ENCODE measurements at regions of chr7 and their contacts with region 1.

Region 1: GRCh38 chr7:99408379-99409191 is at the starts of genes BUD31 and PDAP1:
- DNase-seq: peak; percentile 92 to 100 (median 98)
- ATAC-seq: peak; percentile 96
- H3K4me3 ChIP-seq: peak within 1 kb of the TSS; percentile 89
- H3K4me3 Mint-ChIP-seq: peak within 1 kb of the TSS; percentile 91 to 98 (median 96)
- H3K27ac ChIP-seq: peak within 1 kb of the TSS; percentile 93
- H3K27ac Mint-ChIP-seq: peak within 1 kb of the TSS; percentile 94 to 98 (median 97)
- H3K4me1 ChIP-seq: peaks cover 26 to 37% of the 10 kb centered on the region in 2 donors
- H3K4me1 Mint-ChIP-seq: peaks cover 37 to 67% (median 50%) of the 10 kb centered on the region in 7 donors
- H3K27me3 ChIP-seq: no peaks in the 10 kb centered on the region
- H3K27me3 Mint-ChIP-seq: no peaks in the 10 kb centered on the region
- total RNA-seq, gene BUD31: 55.2 to 134 (median 83.9) TPM
- total RNA-seq, gene PDAP1: 42.8 to 104 (median 64.0) TPM

Region 2: DNA sequence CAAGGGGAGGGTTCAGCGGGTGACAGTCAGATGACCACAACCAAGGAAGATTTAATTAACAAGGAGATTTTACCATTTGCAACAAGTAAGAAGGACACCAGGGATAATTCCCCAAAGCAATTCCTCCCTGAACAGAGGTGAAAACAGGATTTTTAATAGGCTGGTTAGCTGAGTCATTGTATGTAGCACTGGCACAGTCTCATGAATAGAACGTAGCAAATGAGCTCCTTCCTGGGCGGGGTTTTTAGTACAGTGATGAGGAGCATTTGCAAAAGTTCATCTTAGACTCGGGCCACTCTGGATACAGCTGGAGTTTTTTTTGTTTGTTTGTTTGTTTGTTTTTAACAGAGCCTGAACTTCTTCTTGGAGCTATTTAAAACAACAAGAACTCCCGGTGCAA is 1637.7 kb before region 1 on chr7:
- CTCF ChIA-PET with region 1: no interaction called
- POLR2A ChIA-PET with region 1: no interaction called
- intact Hi-C with region 1: no loop called
- DNase-seq: no peak
- ATAC-seq: no peak
- H3K4me3 ChIP-seq: no peak overlapping the region
- H3K4me3 Mint-ChIP-seq: no peak overlapping the region
- H3K27ac ChIP-seq: no peak overlapping the region
- H3K27ac Mint-ChIP-seq: no peak overlapping the region
- H3K4me1 ChIP-seq: no peaks in the 10 kb centered on the region
- H3K4me1 Mint-ChIP-seq: no peaks in the 10 kb centered on the region
- H3K27me3 ChIP-seq: no peaks in the 10 kb centered on the region
- H3K27me3 Mint-ChIP-seq: peaks cover 0 to 10% (median 1%) of the 10 kb centered on the region in 5 donors

Region 3: DNA sequence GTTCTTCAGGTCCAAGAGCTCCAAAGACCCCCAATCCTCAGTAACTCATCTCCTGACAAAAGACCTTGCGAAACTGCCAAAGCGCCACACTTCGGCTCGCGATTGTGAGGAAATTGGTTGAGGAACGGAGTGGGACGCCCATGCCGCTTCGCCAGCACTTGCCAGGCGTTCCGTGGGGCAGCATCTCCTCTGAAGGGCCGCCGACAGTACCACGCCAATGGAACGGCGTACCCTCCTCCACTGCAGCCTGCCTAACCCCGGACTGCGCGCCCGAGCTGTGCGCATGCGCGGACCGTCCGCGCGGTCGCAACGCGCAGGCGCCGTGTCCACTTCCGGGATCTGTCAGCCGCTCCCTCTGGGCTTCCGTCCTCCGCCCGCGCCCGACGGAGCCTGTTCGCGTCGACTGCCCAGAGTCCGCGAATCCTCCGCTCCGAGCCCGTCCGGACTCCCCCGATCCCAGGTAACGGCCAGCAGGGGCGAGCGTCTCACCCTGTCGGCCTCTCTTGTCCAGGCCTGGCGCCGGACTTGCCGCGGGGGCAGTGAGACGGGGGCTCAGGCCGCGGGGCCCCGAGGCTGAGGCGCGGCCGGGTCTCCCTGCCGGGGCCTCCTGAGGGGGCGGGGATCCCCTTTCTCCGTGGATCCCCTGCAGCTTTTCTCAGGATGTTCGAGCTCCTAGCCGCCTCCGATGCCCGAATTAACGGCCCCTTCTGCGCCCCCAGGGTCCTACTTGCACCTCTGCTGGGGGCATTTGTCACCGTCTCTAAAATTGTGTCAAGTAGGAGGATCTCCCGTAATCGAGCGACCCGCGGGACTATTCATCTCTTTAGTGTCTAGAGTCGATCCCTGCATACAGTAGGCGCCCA is 82.8 kb before region 1 on chr7 and contains the start of gene ARPC1A:
- CTCF ChIA-PET with region 1: no interaction called
- POLR2A ChIA-PET with region 1: interaction called, 6 read pairs
- intact Hi-C with region 1: loop called (anchors 1 kb)
- DNase-seq: peak; percentile 84 to 96 (median 94)
- ATAC-seq: peak; percentile 95
- H3K4me3 ChIP-seq: peak within 1 kb of the TSS; percentile 77
- H3K4me3 Mint-ChIP-seq: peak within 1 kb of the TSS; percentile 86 to 99 (median 92)
- H3K27ac ChIP-seq: peak within 1 kb of the TSS; percentile 89
- H3K27ac Mint-ChIP-seq: peak within 1 kb of the TSS; percentile 78 to 95 (median 90)
- H3K4me1 ChIP-seq: peaks cover 25 to 26% of the 10 kb centered on the region in 2 donors
- H3K4me1 Mint-ChIP-seq: peaks cover 33 to 48% (median 43%) of the 10 kb centered on the region in 7 donors
- H3K27me3 ChIP-seq: no peaks in the 10 kb centered on the region
- H3K27me3 Mint-ChIP-seq: peaks cover 0 to 11% (median 0%) of the 10 kb centered on the region in 5 donors
- total RNA-seq, gene ARPC1A: 28.1 to 62.5 (median 43.2) TPM

Region 4: DNA sequence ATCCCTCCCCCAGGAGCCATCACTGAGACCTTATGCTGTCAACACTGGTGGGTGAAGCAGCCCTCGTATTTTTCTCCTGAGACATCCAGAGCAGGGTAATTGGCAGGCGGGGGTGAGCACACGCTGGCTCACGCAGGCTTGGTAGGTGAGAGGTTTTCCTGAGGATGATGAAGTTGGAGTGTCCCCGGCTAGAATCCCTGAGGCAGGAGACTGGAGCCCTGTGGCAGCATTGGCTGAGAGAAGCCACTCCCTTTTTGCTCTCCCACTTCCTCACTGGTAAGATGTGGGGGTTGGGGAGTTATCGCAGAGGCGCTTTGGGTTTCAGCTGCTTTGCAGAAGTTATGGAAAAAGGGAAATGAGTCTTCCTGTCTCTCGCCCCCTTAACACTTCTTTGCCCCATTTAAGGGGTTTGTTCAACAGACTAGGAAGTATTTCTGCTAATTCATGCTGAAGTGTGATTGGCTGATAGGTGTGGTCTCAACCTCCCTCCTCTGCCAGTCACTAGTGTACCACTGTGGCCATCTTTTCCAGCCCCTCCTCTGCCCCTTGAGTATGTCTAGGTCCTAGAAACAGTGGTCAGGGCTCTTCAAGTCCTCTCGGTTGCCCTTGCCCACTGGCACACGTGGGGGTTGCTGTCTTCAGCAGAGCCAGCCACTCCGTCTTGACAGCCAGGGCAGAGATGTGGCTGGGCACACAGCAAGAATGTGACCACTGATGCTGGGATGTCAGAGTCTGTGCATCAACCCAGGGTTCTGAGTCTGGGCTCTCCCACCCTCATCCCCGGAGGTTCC is 28.4 kb before region 1 on chr7:
- CTCF ChIA-PET with region 1: interaction called, 3 read pairs
- POLR2A ChIA-PET with region 1: interaction called, 62 read pairs
- intact Hi-C with region 1: loop called (anchors 1 kb)
- DNase-seq: peak in 7 of 9 donors; percentile 21 to 37 (median 30)
- ATAC-seq: peak; percentile 15
- H3K4me3 ChIP-seq: peak overlapping the region; percentile 78
- H3K4me3 Mint-ChIP-seq: peak overlapping the region; percentile 78 to 91 (median 84)
- H3K27ac ChIP-seq: peak overlapping the region; percentile 96
- H3K27ac Mint-ChIP-seq: peak overlapping the region; percentile 87 to 99 (median 98)
- H3K4me1 ChIP-seq: peaks cover 44 to 68% of the 10 kb centered on the region in 2 donors
- H3K4me1 Mint-ChIP-seq: peaks cover 29 to 70% (median 60%) of the 10 kb centered on the region in 7 donors
- H3K27me3 ChIP-seq: no peaks in the 10 kb centered on the region
- H3K27me3 Mint-ChIP-seq: no peaks in the 10 kb centered on the region

Region 5: DNA sequence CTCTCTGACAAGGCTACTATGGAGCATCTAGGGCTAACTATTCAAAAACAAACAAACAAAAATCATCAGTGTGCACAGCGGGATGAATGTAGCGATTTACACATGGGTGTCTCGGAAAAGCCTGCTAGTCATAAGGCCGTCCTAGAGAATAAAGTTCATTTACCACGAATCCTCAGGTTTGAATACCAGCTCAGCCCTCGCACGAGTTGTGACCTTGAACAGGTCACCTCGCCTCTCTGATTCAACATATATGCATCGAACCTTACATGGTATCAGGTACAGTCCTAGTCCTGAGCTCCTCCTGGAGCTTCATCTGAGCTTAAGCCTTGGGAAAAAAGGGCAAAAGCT is 56.8 kb after region 1 on chr7:
- CTCF ChIA-PET with region 1: interaction called, 5 read pairs
- POLR2A ChIA-PET with region 1: interaction called, 3 read pairs
- intact Hi-C with region 1: loop called (anchors 1 kb)
- DNase-seq: no peak
- ATAC-seq: peak; percentile 2
- H3K4me3 ChIP-seq: peak overlapping the region; percentile 97
- H3K4me3 Mint-ChIP-seq: peak overlapping the region; percentile 82 to 98 (median 96)
- H3K27ac ChIP-seq: peak overlapping the region; percentile 90
- H3K27ac Mint-ChIP-seq: peak overlapping the region; percentile 90 to 98 (median 96)
- H3K4me1 ChIP-seq: peaks cover 10 to 11% of the 10 kb centered on the region in 2 donors
- H3K4me1 Mint-ChIP-seq: peaks cover 19 to 52% (median 31%) of the 10 kb centered on the region in 7 donors
- H3K27me3 ChIP-seq: no peaks in the 10 kb centered on the region
- H3K27me3 Mint-ChIP-seq: peaks cover 0 to 2% (median 0%) of the 10 kb centered on the region in 5 donors

Region 6: DNA sequence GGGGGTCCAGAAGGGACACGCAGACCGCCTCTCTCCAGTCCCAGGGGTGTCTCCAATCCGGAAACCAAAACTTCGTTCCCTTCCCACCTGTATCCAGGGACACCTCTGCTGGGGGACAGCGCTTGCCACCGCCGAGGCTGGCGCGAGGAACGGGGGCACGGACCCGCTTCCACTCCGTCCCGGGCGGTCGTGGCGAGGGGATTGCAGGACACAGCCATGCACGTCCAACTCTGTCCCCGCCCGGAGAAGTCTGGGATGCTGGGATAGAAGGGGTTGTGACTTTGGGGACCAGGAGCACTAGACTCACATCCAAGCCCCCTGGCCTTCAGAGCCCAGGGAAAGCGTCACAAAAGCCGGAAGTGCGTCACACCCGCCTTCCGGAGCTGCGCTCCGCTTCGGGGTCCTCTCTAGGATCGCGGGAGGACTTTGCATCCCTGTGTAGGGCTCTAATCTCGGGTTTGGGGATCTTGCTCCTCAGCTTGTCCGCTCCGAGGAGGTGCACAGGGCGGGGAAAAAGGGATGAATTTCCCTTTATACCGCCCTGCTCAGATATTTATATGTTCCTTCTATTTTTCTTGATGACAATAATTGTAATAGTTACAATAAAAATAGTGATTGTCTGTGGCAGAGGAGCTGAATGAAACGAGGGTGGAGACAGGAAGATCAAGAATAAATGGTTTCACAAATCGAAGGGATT is 143.3 kb after region 1 on chr7 and contains the start of gene FAM200A:
- CTCF ChIA-PET with region 1: no interaction called
- POLR2A ChIA-PET with region 1: interaction called, 15 read pairs
- intact Hi-C with region 1: loop called in 1 of 2 experiments (anchors 1 kb)
- DNase-seq: peak; percentile 62 to 88 (median 83)
- ATAC-seq: peak; percentile 99
- H3K4me3 ChIP-seq: peak within 1 kb of the TSS; percentile 93
- H3K4me3 Mint-ChIP-seq: peak within 1 kb of the TSS; percentile 85 to 95 (median 90)
- H3K27ac ChIP-seq: peak within 1 kb of the TSS; percentile 95
- H3K27ac Mint-ChIP-seq: peak within 1 kb of the TSS; percentile 73 to 98 (median 95)
- H3K4me1 ChIP-seq: peaks cover 17 to 23% of the 10 kb centered on the region in 2 donors
- H3K4me1 Mint-ChIP-seq: peaks cover 23 to 62% (median 48%) of the 10 kb centered on the region in 7 donors
- H3K27me3 ChIP-seq: no peaks in the 10 kb centered on the region
- H3K27me3 Mint-ChIP-seq: no peaks in the 10 kb centered on the region
- total RNA-seq, gene FAM200A: 1.9 to 13.6 (median 5.0) TPM

Region 7: DNA sequence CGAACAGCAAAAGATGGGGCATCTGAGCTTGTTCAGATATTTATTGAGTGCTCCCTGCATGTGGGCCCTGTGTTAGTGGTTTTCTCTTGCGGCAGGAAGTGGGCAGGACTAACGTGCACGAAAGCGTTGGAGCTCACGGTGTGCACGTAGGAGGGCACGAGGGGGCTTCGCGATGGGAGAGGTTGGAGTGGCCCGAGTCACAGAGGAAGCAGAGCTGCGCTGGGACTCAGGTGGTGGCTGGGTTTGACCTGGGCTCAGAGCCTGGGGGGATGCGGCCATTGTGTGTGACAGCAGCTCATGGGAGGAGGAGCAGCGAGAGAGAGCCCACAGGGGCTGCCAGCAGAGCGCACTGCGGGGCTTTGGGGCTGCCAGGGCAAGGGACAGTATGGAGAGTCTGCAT is 215.9 kb after region 1 on chr7:
- CTCF ChIA-PET with region 1: no interaction called
- POLR2A ChIA-PET with region 1: no interaction called
- intact Hi-C with region 1: loop called in 1 of 2 experiments (anchors 2 kb)
- DNase-seq: peak; percentile 34 to 89 (median 86)
- ATAC-seq: peak; percentile 96
- H3K4me3 ChIP-seq: peak overlapping the region; percentile 62
- H3K4me3 Mint-ChIP-seq: peak overlapping the region; percentile 83 to 95 (median 89)
- H3K27ac ChIP-seq: peak overlapping the region; percentile 89
- H3K27ac Mint-ChIP-seq: peak overlapping the region; percentile 91 to 100 (median 97)
- H3K4me1 ChIP-seq: peaks cover 23 to 30% of the 10 kb centered on the region in 2 donors
- H3K4me1 Mint-ChIP-seq: peaks cover 34 to 76% (median 60%) of the 10 kb centered on the region in 7 donors
- H3K27me3 ChIP-seq: no peaks in the 10 kb centered on the region
- H3K27me3 Mint-ChIP-seq: no peaks in the 10 kb centered on the region